WTC11 (cell line): ENCODE measurements at regions of chr1 and their contacts with region 1.

Region 1: GRCh38 chr1:17574516-17574915 is 35.0 kb downstream of the ARHGEF10L start:
- DNase-seq: peak; percentile 55
- ATAC-seq: peak; percentile 55
- H3K4me3 Mint-ChIP-seq: no peak overlapping the region
- H3K27ac Mint-ChIP-seq: peak overlapping the region; percentile 91
- H3K4me1 Mint-ChIP-seq: peaks cover 82% of the 10 kb centered on the region
- H3K27me3 Mint-ChIP-seq: no peaks in the 10 kb centered on the region
- CTCF ChIP-seq: peak; percentile 21; the same call in 1 of the 2 replicates

Region 2: GRCh38 chr1:17507916-17508315 is 66.6 kb before region 1 on chr1:
- CTCF ChIA-PET with region 1: interaction called, 114 read pairs
- POLR2A ChIA-PET with region 1: interaction called, 4 read pairs
- DNase-seq: peak; percentile 45
- ATAC-seq: peak; percentile 79
- H3K4me3 Mint-ChIP-seq: no peak overlapping the region
- H3K27ac Mint-ChIP-seq: no peak overlapping the region
- H3K4me1 Mint-ChIP-seq: 0 out of 2 replicates have a peak, but pooled peaks cover 1% of the 10 kb centered on the region
- H3K27me3 Mint-ChIP-seq: 0 out of 2 replicates have a peak, but pooled peaks cover 2% of the 10 kb centered on the region
- CTCF ChIP-seq: no peak

Region 3: DNA sequence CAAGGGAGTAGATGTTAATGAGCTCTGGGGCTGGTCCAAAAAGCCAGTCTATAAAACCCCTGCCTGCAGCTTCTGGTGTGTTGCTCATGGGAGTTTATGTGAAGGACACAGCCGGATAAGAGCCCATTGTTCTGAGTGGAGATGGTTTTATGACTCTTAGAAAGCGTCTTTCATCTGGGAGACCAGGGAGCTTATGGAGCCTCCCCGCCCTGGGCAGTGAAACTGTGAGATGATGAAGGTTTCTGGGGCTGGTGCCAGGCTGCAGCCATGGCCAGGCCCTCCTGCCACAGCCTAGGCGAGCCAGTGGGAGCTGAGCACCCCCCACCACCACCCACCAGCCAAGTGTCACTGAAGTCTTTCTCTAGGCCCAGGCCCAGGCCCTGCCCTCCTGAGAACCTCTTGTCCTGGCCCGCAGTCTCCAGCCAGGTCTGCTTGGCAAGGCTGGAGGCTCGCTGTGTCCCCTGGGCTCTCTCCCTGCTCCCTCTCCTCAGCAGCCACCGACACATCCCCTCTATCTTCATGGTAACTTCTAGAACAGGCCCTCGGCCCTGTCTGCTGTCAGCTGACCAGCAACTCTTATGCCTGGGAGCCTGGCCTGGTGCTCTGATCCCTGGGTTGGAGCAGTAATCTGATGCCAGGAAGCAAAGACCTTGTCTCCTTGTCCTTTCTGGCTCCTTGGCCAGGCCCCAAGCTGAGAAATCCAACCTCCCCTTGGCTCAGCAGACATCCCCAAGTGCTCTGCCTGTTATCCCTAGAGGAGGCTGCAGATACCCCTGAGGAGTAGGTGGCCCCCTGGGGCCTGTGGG is 42.6 kb before region 1 on chr1:
- CTCF ChIA-PET with region 1: interaction called, 41 read pairs
- POLR2A ChIA-PET with region 1: no interaction called
- DNase-seq: no peak
- ATAC-seq: peak; percentile 43
- H3K4me3 Mint-ChIP-seq: no peak overlapping the region
- H3K27ac Mint-ChIP-seq: peak overlapping the region; percentile 36; the same call in 1 of the 2 replicates
- H3K4me1 Mint-ChIP-seq: peaks cover 45% of the 10 kb centered on the region
- H3K27me3 Mint-ChIP-seq: no peaks in the 10 kb centered on the region
- CTCF ChIP-seq: no peak

Region 4: GRCh38 chr1:17561561-17561985 is 12.9 kb before region 1 on chr1:
- CTCF ChIA-PET with region 1: interaction called, 31 read pairs
- POLR2A ChIA-PET with region 1: interaction called, 4 read pairs
- DNase-seq: no peak
- ATAC-seq: no peak
- H3K4me3 Mint-ChIP-seq: no peak overlapping the region
- H3K27ac Mint-ChIP-seq: peak overlapping the region; percentile 95
- H3K4me1 Mint-ChIP-seq: peaks cover 92% of the 10 kb centered on the region
- H3K27me3 Mint-ChIP-seq: no peaks in the 10 kb centered on the region
- CTCF ChIP-seq: no peak

Region 5: GRCh38 chr1:17640393-17640792 is 65.9 kb after region 1 on chr1:
- CTCF ChIA-PET with region 1: interaction called, 10 read pairs
- POLR2A ChIA-PET with region 1: no interaction called
- DNase-seq: no peak
- ATAC-seq: no peak
- H3K4me3 Mint-ChIP-seq: no peak overlapping the region
- H3K27ac Mint-ChIP-seq: no peak overlapping the region
- H3K4me1 Mint-ChIP-seq: no peaks in the 10 kb centered on the region
- H3K27me3 Mint-ChIP-seq: no peaks in the 10 kb centered on the region
- CTCF ChIP-seq: no peak